ENCODE measurements at regions of chr2 and their contacts with region 1.

Region 1: GRCh38 chr2:190319555-190320498 is at the start of gene HIBCH:
- DNase-seq: peak; percentile 89
- H3K4me3 Mint-ChIP-seq: peak within 1 kb of the TSS; percentile 89
- H3K27ac Mint-ChIP-seq: peak within 1 kb of the TSS; percentile 85
- H3K4me1 Mint-ChIP-seq: peaks cover 54% of the 10 kb centered on the region
- H3K27me3 Mint-ChIP-seq: no peaks in the 10 kb centered on the region
- total RNA-seq, gene HIBCH: 16.2 to 17.3 TPM

Region 2: GRCh38 chr2:190126798-190127197 is 193.0 kb before region 1 on chr2:
- CTCF ChIA-PET with region 1: no interaction called
- POLR2A ChIA-PET with region 1: no interaction called
- DNase-seq: no peak
- H3K4me3 Mint-ChIP-seq: no peak overlapping the region
- H3K27ac Mint-ChIP-seq: no peak overlapping the region
- H3K4me1 Mint-ChIP-seq: no peaks in the 10 kb centered on the region
- H3K27me3 Mint-ChIP-seq: no peaks in the 10 kb centered on the region

Region 3: DNA sequence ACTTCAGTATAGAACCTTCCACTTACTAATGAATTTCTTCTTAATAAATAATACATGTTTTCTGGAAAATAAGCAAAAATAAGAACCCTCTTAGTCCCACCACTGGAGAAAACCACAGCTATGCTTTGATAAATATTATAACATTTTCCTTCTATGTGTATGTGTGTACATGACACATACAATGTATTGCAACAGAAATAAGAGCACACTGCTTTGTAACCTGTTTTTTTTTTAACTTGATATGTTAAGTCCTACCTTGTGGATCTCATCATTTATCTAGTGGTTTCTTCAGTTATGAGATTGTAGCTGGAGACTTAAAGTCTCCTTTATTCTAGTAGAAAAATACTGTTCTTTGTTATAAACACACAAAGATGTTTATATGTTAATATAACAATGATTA is 40.7 kb after region 1 on chr2:
- CTCF ChIA-PET with region 1: interaction called, 13 read pairs
- POLR2A ChIA-PET with region 1: interaction called, 6 read pairs
- DNase-seq: no peak
- H3K4me3 Mint-ChIP-seq: peak overlapping the region; percentile 82
- H3K27ac Mint-ChIP-seq: peak overlapping the region; percentile 81
- H3K4me1 Mint-ChIP-seq: peaks cover 27% of the 10 kb centered on the region
- H3K27me3 Mint-ChIP-seq: no peaks in the 10 kb centered on the region

Measured in activated CD4-positive, alpha-beta memory T cell treated with anti-CD3 and anti-CD28 coated beads, Interleukin-2, amount 10 ng/mL, durations not matched to agents 7 days and 5 days (primary cell).